Activated CD8-positive, alpha-beta T cell treated with anti-CD3 and anti-CD28 coated beads, Interleukin-2, amount 10 ng/mL, durations not matched to agents 7 days and 5 days (primary cell): ENCODE measurements at regions of chr9 and their contacts with region 1.

Region 1: GRCh38 chr9:37286530-37287175 is 135.8 kb upstream of the GRHPR start:
- DNase-seq: no peak
- ATAC-seq: no peak
- H3K4me3 Mint-ChIP-seq: no peak overlapping the region
- H3K27ac Mint-ChIP-seq: no peak overlapping the region
- H3K4me1 Mint-ChIP-seq: peaks cover 22% of the 10 kb centered on the region
- H3K27me3 Mint-ChIP-seq: no peaks in the 10 kb centered on the region

Region 2: GRCh38 chr9:37187713-37188439 is 98.8 kb before region 1 on chr9:
- CTCF ChIA-PET with region 1: no interaction called
- POLR2A ChIA-PET with region 1: no interaction called
- DNase-seq: no peak
- ATAC-seq: peak; percentile 67
- H3K4me3 Mint-ChIP-seq: peak overlapping the region; percentile 74
- H3K27ac Mint-ChIP-seq: peak overlapping the region; percentile 86
- H3K4me1 Mint-ChIP-seq: peaks cover 31% of the 10 kb centered on the region
- H3K27me3 Mint-ChIP-seq: no peaks in the 10 kb centered on the region

Region 3: DNA sequence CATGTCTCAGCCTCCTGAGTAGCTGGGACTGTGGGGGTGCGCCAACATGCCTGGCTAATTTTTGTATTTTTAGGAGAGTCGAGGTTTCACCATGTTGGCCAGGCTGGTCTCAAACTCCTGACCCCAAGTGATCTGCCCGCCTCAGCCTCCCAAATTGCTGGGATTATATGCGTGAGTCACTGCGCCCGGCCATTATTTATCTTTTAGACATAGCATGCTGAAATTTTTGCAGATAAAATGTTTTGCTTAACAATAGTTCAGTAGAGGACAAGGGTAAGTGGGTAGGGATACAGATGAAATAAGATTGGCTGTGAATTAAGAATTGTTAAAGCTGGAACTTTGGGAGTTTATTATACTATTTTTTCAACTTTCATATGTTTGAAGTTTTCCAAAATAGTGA is 15.0 kb before region 1 on chr9:
- CTCF ChIA-PET with region 1: no interaction called
- POLR2A ChIA-PET with region 1: no interaction called
- DNase-seq: no peak
- ATAC-seq: no peak
- H3K4me3 Mint-ChIP-seq: no peak overlapping the region
- H3K27ac Mint-ChIP-seq: no peak overlapping the region
- H3K4me1 Mint-ChIP-seq: no peaks in the 10 kb centered on the region
- H3K27me3 Mint-ChIP-seq: no peaks in the 10 kb centered on the region

Region 4: GRCh38 chr9:37302277-37302676 is 15.6 kb after region 1 on chr9:
- CTCF ChIA-PET with region 1: interaction called, 13 read pairs
- POLR2A ChIA-PET with region 1: no interaction called
- DNase-seq: peak; percentile 77
- ATAC-seq: peak; percentile 96
- H3K4me3 Mint-ChIP-seq: peak overlapping the region; percentile 69
- H3K27ac Mint-ChIP-seq: peak overlapping the region; percentile 91
- H3K4me1 Mint-ChIP-seq: peaks cover 59% of the 10 kb centered on the region
- H3K27me3 Mint-ChIP-seq: no peaks in the 10 kb centered on the region

Region 5: GRCh38 chr9:37371565-37372464 is 85.2 kb after region 1 on chr9:
- CTCF ChIA-PET with region 1: no interaction called
- POLR2A ChIA-PET with region 1: no interaction called
- DNase-seq: no peak
- ATAC-seq: no peak
- H3K4me3 Mint-ChIP-seq: no peak overlapping the region
- H3K27ac Mint-ChIP-seq: no peak overlapping the region
- H3K4me1 Mint-ChIP-seq: peaks cover 4% of the 10 kb centered on the region
- H3K27me3 Mint-ChIP-seq: peaks cover 10% of the 10 kb centered on the region